AG04450 (cell line): ENCODE measurements at regions of chr12 and their contacts with region 1.

Region 1: DNA sequence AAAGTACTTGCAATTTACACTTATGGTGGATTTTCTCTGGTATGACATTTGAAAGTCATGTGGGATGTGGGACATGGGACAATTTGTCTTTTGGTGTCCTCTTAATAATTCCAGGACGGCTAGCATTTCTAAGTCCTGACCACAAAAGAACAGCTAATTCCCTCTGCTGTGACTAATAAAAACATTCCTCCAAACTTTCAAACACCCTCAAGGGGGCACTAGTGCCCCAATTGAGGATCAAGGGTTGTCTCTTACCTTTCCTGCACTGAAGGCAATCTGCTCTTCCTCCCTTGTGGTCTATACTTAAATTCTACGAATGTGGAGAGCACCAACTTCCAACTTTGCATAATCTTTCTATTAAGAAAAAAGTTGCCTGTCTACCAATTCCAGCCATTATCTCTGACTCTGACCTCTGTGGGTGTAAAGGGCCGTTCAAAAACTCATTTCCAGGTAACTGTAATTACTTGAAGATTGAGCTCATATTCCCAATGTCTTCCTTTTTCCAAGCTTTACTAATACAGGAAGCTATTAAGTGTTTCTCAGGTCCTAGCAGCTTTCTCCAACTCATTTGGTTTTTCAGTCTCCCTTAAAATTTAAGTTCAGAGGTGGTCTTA is 210.2 kb downstream of the PTPRO start:
- DNase-seq: peak; percentile 50
- H3K4me3 ChIP-seq: no peak overlapping the region
- H3K27ac ChIP-seq: no peak overlapping the region
- H3K27me3 ChIP-seq: no peaks in the 10 kb centered on the region
- CTCF ChIP-seq: peak; percentile 73

Region 2: DNA sequence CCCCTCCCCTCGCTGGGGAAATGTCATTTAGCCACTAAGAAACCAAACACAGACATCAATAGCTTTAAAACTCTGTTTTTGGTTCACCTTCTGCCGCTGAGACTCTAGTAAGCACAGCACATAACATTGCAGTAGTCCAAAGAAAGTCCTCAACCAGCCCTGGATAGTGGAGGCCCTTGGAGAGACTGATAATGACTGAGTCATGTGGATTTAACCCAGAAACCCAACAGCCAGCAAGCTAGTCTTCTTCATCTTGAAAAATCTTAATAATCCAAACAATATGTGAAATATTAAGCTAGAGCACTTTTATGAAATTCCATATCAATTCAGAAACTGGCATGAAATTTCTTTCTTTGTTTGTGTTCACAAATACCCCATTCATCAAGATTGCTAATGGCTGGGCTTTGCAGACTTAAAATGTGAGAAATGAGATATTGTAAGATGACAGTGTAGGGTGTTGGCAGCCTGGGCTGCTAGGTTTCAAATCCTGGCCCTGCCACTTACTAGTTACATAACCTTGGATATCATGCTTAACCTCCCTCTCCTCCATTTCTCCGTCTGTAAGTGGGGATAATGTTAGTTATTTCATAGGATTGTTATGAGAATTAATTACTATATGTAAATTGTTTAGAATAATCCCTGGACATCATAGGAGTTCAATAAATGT is 351.3 kb before region 1 on chr12:
- CTCF ChIA-PET with region 1: no interaction called
- POLR2A ChIA-PET with region 1: no interaction called
- DNase-seq: no peak
- H3K4me3 ChIP-seq: no peak overlapping the region
- H3K27ac ChIP-seq: no peak overlapping the region
- H3K27me3 ChIP-seq: no peaks in the 10 kb centered on the region
- CTCF ChIP-seq: no peak

Region 3: DNA sequence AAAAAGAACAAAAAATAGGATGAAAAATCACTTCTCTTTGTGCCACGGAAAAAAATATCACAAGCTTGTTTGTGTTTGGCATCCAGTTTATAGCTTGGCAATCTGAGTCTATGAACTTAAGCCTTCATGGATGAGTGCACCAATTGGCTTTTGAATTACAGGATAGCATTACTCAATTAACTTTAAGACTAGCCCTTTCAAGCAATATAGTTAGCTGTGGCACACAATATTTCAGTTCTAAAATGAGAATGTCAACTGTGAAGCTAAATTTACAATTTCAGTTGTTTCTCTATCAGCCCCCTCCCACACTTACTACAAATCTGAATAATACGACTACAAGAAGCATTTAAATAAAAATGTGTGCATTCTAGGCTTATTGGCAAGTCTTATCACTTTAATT is 319.5 kb before region 1 on chr12:
- CTCF ChIA-PET with region 1: no interaction called
- POLR2A ChIA-PET with region 1: no interaction called
- DNase-seq: no peak
- H3K4me3 ChIP-seq: no peak overlapping the region
- H3K27ac ChIP-seq: no peak overlapping the region
- H3K27me3 ChIP-seq: no peaks in the 10 kb centered on the region
- CTCF ChIP-seq: no peak

Region 4: DNA sequence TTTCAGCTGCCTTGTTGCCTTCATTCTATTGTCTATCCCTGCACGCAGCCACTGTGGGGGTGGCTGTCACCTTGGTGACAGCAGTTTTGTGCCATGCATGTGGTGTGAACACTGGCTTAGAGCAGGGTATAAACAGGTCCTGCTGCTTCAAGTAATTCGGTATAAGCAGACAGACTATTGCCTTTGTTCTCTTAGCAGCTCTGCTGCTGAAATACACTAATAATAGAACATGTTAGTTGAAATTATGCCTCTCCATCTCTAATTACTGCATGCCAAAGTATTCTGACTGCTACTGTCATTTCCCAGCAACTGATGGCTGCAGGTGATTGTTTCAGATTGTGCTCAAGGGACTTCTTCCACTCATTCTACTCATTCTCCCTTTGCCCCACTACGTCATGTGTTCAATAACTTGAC is 175.5 kb before region 1 on chr12:
- CTCF ChIA-PET with region 1: no interaction called
- POLR2A ChIA-PET with region 1: no interaction called
- DNase-seq: no peak
- H3K4me3 ChIP-seq: no peak overlapping the region
- H3K27ac ChIP-seq: no peak overlapping the region
- H3K27me3 ChIP-seq: no peaks in the 10 kb centered on the region
- CTCF ChIP-seq: no peak

Region 5: GRCh38 chr12:15404485-15404884 is 128.0 kb before region 1 on chr12:
- CTCF ChIA-PET with region 1: no interaction called
- POLR2A ChIA-PET with region 1: no interaction called
- DNase-seq: no peak
- H3K4me3 ChIP-seq: no peak overlapping the region
- H3K27ac ChIP-seq: no peak overlapping the region
- H3K27me3 ChIP-seq: no peaks in the 10 kb centered on the region
- CTCF ChIP-seq: no peak

Region 6: DNA sequence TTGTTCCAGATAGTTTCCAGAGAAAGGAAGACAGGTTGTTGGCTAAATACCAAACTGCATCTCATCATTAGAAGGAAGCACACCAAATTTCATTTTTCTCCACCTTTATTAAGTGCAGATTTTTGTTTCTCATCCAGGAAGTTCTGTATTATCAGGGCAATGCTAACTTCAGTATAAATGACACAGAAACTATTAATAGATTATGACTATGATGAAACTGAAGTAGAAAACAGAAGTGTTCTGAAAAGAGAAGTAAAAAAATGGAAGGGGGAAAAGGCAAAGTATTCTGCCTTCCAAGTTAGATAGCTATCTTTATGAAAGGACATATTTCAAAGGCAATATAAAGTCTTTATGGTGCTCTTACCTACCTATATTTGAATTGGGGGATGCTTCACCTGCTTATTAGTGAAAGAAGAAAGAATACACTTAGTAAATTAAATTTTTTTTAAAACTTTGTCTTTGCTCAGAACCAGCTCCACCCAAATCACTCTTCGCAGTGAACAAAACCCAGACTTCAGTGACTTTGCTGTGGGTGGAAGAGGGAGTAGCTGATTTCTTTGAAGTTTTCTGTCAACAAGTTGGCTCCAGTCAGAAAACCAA is 13.7 kb after region 1 on chr12:
- CTCF ChIA-PET with region 1: interaction called, 16 read pairs
- POLR2A ChIA-PET with region 1: no interaction called
- DNase-seq: no peak
- H3K4me3 ChIP-seq: no peak overlapping the region
- H3K27ac ChIP-seq: no peak overlapping the region
- H3K27me3 ChIP-seq: no peaks in the 10 kb centered on the region
- CTCF ChIP-seq: no peak

Region 7: GRCh38 chr12:15563663-15564062 is 31.2 kb after region 1 on chr12:
- CTCF ChIA-PET with region 1: interaction called, 31 read pairs
- POLR2A ChIA-PET with region 1: no interaction called
- DNase-seq: peak; percentile 20
- H3K4me3 ChIP-seq: no peak overlapping the region
- H3K27ac ChIP-seq: no peak overlapping the region
- H3K27me3 ChIP-seq: no peaks in the 10 kb centered on the region
- CTCF ChIP-seq: no peak

Region 8: DNA sequence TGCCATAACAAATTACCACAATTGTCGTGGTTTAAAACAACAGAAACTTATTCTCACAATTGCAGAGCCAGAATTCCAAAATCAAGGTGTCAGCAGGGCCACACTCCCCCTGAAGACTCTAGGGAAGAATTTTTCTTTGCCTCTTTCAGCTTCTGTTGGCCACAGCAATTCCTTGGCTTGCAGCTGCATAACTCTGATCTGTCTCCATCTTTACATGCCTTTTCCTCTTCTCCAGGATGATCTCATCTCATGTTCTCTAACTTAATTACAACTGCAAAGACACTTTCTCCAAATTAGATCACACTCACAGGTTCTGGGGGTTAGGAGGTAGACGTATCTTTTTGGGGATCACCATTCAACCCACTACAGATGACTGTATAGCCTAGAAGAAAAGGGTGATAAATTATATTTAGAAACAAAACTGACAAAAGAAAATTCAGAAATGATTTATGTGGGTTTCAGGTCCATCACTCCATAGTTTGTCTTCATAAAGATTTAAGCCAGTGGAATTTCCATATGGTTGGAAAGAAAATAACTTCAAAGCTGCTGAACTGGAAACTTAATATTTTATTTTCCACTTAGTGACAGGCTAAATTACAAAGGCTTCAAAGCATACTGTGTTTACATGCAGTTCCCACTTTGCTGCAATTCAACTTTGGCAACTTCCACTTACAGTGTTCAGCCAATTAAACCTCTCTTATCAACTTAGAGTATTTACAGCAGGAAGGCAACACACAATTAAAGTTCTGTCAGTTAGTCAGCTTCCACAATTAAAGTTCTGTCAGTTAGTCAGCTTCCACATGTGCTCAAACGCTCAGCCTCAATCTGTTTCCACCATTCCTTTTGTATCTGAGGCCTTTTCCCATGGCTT is 43.4 kb after region 1 on chr12:
- CTCF ChIA-PET with region 1: interaction called, 16 read pairs
- POLR2A ChIA-PET with region 1: interaction called, 3 read pairs
- DNase-seq: no peak
- H3K4me3 ChIP-seq: no peak overlapping the region
- H3K27ac ChIP-seq: no peak overlapping the region
- H3K27me3 ChIP-seq: no peaks in the 10 kb centered on the region
- CTCF ChIP-seq: no peak

Region 9: DNA sequence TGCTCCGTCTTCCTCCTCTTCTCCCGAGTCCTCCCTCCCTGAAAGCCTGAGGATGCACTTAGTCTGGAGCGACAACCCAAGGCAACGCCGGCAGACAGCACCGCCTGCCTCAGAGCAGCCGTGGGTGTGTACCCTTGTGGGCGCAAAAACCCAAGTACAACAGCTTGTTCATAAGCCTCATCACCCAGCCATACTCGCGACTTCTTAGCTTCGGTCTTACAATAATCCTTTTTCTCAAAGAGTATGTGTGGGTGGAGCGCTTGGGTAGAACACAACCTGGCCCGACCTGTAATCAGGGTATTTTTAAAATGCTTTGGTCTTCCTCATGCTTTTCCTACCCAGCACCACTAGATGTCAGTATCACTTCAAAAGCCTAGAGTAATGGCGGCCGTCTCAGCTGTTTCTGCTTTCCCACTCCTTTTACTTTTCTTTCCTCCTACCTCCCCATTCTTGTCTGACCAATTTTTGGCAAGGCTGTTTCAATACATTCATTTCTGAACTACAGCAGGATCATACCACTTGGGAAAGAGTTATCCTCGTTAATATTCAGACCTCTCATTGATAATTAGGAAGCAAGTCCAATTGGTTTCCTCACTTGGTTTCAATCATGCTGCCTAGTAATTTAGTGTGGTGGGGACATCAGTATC is 57.8 kb after region 1 on chr12:
- CTCF ChIA-PET with region 1: interaction called, 226 read pairs
- POLR2A ChIA-PET with region 1: no interaction called
- DNase-seq: peak; percentile 41
- H3K4me3 ChIP-seq: peak overlapping the region; percentile 56
- H3K27ac ChIP-seq: no peak overlapping the region
- H3K27me3 ChIP-seq: no peaks in the 10 kb centered on the region
- CTCF ChIP-seq: peak; percentile 95

Region 10: GRCh38 chr12:15856097-15856982 is 323.9 kb after region 1 on chr12:
- CTCF ChIA-PET with region 1: interaction called, 66 read pairs
- POLR2A ChIA-PET with region 1: no interaction called
- DNase-seq: no peak
- H3K4me3 ChIP-seq: no peak overlapping the region
- H3K27ac ChIP-seq: no peak overlapping the region
- H3K27me3 ChIP-seq: no peaks in the 10 kb centered on the region
- CTCF ChIP-seq: peak; percentile 77

Region 11: GRCh38 chr12:15899282-15899870 is 366.9 kb after region 1 on chr12:
- CTCF ChIA-PET with region 1: interaction called, 14 read pairs
- POLR2A ChIA-PET with region 1: no interaction called
- DNase-seq: no peak
- H3K4me3 ChIP-seq: no peak overlapping the region
- H3K27ac ChIP-seq: no peak overlapping the region
- H3K27me3 ChIP-seq: no peaks in the 10 kb centered on the region
- CTCF ChIP-seq: peak; percentile 70